ENCODE measurements at regions of chr12 and their contacts with region 1.

Region 1: DNA sequence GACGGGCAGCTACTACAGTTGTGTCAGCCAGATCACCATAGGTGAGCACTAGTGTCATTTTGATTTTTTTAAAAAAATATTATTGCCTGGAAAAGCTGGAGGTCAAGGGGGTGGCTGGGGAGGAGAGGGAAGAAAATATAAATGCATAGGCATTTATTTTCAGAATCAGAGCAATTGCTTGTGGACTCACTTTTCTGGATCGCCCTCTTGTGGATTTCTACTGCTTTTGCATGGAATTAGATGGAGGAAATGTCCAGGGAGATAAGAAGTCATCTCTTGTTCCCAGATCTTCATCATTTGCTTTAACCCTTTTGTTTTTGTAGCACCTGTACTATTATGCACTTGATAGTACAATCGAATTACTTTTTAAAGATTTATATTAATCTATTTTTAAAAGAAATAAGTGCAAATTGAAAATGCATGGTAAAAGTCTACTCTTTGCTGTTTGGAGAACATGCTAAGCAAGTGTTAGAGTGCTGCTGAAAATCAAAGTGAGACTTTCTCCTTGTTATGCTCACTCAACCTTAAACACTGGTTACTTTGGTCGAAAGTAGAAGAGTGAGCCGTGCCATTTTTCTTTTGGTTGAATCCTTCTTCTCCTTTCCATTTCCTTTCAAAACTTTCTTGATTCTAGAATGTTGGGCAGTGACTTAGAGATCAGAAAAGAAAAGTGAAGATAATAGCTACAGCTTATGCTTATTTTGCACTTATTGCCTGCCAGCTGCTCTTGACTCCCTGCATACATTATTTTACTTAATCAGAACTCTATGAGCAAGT is 60.6 kb upstream of the ANO4 start:
- DNase-seq: no peak
- H3K4me3 ChIP-seq: no peak overlapping the region
- H3K27ac ChIP-seq: no peak overlapping the region
- H3K4me1 ChIP-seq: no peaks in the 10 kb centered on the region
- H3K27me3 ChIP-seq: peaks cover 6% of the 10 kb centered on the region
- CTCF ChIP-seq: peak; percentile 32 to 67 (median 56)
- POLR2A ChIP-seq: no peak

Region 2: GRCh38 chr12:100356644-100357223 is 377.3 kb before region 1 on chr12 and contains the start of gene SLC17A8:
- intact Hi-C with region 1: loop called in 1 of 2 experiments (anchors 10 kb)
- DNase-seq: no peak
- H3K4me3 ChIP-seq: no peak within 1 kb of the TSS
- H3K27ac ChIP-seq: no peak within 1 kb of the TSS
- H3K4me1 ChIP-seq: no peaks in the 10 kb centered on the region
- H3K27me3 ChIP-seq: peaks cover 4% of the 10 kb centered on the region
- CTCF ChIP-seq: no peak
- POLR2A ChIP-seq: no peak
- total RNA-seq, gene SLC17A8: 0.11 to 0.85 (median 0.51) TPM in 7 of 9 donors, not detected in the others

Region 3: GRCh38 chr12:100427078-100427477 is 306.9 kb before region 1 on chr12:
- intact Hi-C with region 1: no loop called
- DNase-seq: peak in 6 of 7 donors; percentile 27 to 54 (median 42)
- H3K4me3 ChIP-seq: no peak overlapping the region
- H3K27ac ChIP-seq: no peak overlapping the region
- H3K4me1 ChIP-seq: no peaks in the 10 kb centered on the region
- H3K27me3 ChIP-seq: no peaks in the 10 kb centered on the region
- CTCF ChIP-seq: no peak
- POLR2A ChIP-seq: no peak

Region 4: DNA sequence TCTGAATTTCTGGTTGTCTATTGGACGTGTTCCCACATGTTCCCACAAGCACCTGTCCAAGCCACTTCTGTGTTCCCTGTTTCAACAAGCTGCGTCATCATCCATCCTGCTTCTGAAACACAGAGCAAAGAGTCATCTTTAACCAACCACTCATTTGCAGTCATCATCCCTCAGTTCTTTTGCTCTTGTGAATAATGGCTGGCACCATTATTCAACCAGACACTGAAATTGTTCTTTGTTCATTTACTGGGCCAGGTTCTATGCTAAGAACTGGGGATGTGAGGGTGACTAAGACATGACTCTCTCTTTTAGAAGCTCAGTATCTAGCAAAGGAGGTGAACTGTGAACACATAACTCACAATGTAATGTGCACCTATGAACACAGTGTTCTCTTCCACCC is 19.8 kb after region 1 on chr12:
- intact Hi-C with region 1: no loop called
- DNase-seq: no peak
- H3K4me3 ChIP-seq: no peak overlapping the region
- H3K27ac ChIP-seq: no peak overlapping the region
- H3K4me1 ChIP-seq: no peaks in the 10 kb centered on the region
- H3K27me3 ChIP-seq: no peaks in the 10 kb centered on the region
- CTCF ChIP-seq: no peak
- POLR2A ChIP-seq: no peak

Region 5: DNA sequence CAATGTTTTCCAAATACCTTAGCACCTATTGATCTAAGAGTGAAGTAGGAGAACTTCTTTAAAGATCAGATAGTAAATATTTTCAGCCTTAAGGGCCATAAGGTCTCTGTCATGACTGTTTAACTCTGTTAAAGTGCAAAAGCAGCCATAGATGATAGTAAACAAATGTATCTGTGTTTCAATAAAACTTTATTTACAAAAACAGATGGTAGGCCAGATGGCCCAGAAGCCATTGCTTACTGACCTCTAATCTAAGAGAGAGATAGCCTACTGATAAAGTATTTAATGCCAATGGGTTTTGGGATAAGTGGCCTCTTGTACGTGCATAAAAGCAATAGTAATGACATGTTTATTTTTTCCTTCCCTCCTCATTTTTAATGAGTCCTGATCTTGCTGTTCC is 149.2 kb after region 1 on chr12:
- intact Hi-C with region 1: no loop called
- DNase-seq: no peak
- H3K4me3 ChIP-seq: no peak overlapping the region
- H3K27ac ChIP-seq: no peak overlapping the region
- H3K4me1 ChIP-seq: no peaks in the 10 kb centered on the region
- H3K27me3 ChIP-seq: no peaks in the 10 kb centered on the region
- CTCF ChIP-seq: no peak
- POLR2A ChIP-seq: no peak